Naive thymus-derived CD4-positive, alpha-beta T cell (primary cell): ENCODE measurements at regions of chr1 and their contacts with region 1.

Region 1: GRCh38 chr1:162357681-162358266 is 18.9 kb downstream of the SPATA46 start:
- DNase-seq: no peak
- ATAC-seq: no peak
- H3K4me3 ChIP-seq: no peak overlapping the region
- H3K4me3 Mint-ChIP-seq: no peak overlapping the region
- H3K27ac ChIP-seq: no peak overlapping the region
- H3K27ac Mint-ChIP-seq: no peak overlapping the region
- H3K4me1 ChIP-seq: no peaks in the 10 kb centered on the region
- H3K4me1 Mint-ChIP-seq: peaks cover 0 to 2% (median 0%) of the 10 kb centered on the region in 7 donors
- H3K27me3 ChIP-seq: no peaks in the 10 kb centered on the region
- H3K27me3 Mint-ChIP-seq: peaks cover 0 to 21% (median 13%) of the 10 kb centered on the region in 5 donors

Region 2: GRCh38 chr1:162107911-162108310 is 249.9 kb before region 1 on chr1:
- CTCF ChIA-PET with region 1: no interaction called
- POLR2A ChIA-PET with region 1: no interaction called
- intact Hi-C with region 1: no loop called
- DNase-seq: no peak
- ATAC-seq: no peak
- H3K4me3 ChIP-seq: no peak overlapping the region
- H3K4me3 Mint-ChIP-seq: no peak overlapping the region
- H3K27ac ChIP-seq: no peak overlapping the region
- H3K27ac Mint-ChIP-seq: no peak overlapping the region
- H3K4me1 ChIP-seq: no peaks in the 10 kb centered on the region
- H3K4me1 Mint-ChIP-seq: peaks cover 0 to 1% (median 0%) of the 10 kb centered on the region in 7 donors
- H3K27me3 ChIP-seq: peaks cover 0 to 5% of the 10 kb centered on the region in 2 donors
- H3K27me3 Mint-ChIP-seq: peaks cover 20 to 69% (median 48%) of the 10 kb centered on the region in 5 donors

Region 3: GRCh38 chr1:162530307-162530987 is 172.7 kb after region 1 on chr1:
- CTCF ChIA-PET with region 1: no interaction called
- POLR2A ChIA-PET with region 1: no interaction called
- intact Hi-C with region 1: no loop called
- DNase-seq: no peak
- ATAC-seq: peak; percentile 31
- H3K4me3 ChIP-seq: no peak overlapping the region
- H3K4me3 Mint-ChIP-seq: no peak overlapping the region
- H3K27ac ChIP-seq: no peak overlapping the region
- H3K27ac Mint-ChIP-seq: peak overlapping the region in 2 of 9 donors; percentile 36 to 58
- H3K4me1 ChIP-seq: no peaks in the 10 kb centered on the region
- H3K4me1 Mint-ChIP-seq: peaks cover 0 to 3% (median 0%) of the 10 kb centered on the region in 7 donors
- H3K27me3 ChIP-seq: no peaks in the 10 kb centered on the region
- H3K27me3 Mint-ChIP-seq: no peaks in the 10 kb centered on the region

Region 4: DNA sequence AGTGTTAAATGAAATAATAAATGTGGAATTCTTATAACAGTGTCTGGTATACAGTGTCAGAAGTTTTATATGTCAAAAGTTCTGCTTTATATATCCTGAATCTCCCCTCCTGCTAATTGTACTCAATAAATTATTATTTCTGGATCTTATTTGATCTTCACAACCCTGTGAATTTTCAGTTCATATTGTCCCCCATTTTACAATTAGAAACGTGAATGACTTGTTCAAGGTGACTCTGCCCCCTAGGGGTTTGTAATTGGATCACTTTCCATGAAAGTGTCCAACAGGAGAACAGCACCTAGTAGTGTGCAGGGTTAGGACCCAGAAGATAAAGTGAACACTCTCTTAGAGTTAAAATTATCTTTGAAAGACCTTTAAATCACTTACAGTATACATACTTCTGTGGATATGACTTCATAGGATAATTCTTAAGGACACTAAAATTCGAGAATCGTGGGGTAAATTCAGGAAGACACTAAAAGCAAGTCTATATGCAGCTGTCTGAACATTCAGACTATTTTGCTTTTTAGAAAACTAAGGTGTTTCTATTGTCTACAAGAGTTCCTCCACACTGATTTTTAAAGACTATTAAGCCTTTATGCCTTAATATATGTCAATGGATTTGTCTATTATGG is 270.0 kb after region 1 on chr1:
- CTCF ChIA-PET with region 1: no interaction called
- POLR2A ChIA-PET with region 1: no interaction called
- intact Hi-C with region 1: loop called in 1 of 2 experiments (anchors 10 kb)
- DNase-seq: peak in 3 of 9 donors; percentile 1 to 8 (median 3)
- ATAC-seq: no peak
- H3K4me3 ChIP-seq: no peak overlapping the region
- H3K4me3 Mint-ChIP-seq: no peak overlapping the region
- H3K27ac ChIP-seq: no peak overlapping the region
- H3K27ac Mint-ChIP-seq: no peak overlapping the region
- H3K4me1 ChIP-seq: no peaks in the 10 kb centered on the region
- H3K4me1 Mint-ChIP-seq: peaks cover 0 to 2% (median 0%) of the 10 kb centered on the region in 7 donors
- H3K27me3 ChIP-seq: no peaks in the 10 kb centered on the region
- H3K27me3 Mint-ChIP-seq: peaks cover 7 to 29% (median 24%) of the 10 kb centered on the region in 5 donors